ENCODE measurements at regions of chr21 and their contacts with region 1.

Region 1: DNA sequence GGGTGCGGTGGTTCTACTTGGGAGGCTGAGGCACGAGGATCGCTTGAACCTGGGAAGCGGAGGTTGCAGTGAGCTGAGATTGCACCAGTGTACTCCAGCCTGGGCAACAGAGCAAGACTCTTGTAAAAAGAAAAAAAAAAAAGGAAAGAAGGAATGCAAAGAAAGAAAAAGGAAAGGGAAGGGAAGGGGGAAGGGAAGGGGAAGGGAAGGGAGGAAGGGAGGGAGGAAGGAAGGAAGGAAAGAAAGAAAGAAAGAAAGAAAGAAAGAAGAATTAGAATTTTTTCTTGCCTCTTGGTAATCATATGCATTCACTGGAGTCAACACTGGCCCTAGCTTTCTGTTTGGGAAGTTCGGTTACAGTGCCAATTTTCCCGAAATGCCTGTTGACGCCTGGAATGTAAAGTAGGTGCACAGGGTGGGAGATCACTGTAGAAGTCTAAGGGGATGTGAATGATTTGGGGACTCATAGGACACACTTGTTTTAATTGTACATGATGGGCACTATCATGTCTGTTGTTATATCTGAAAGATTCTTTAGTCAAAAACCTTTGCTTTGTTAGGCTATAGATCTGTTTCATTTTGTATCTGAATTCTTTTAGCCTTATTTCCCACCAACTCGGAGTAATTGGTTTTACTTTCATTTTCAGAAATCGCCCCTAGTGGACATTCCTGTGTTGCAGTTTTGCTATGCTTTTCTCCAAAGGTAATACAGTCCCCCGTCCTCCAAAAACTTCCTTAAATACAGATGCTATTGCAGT is 59.8 kb upstream of the MORC3 start:
- DNase-seq: peak; percentile 22
- H3K4me3 ChIP-seq: peak overlapping the region; percentile 40
- H3K27me3 ChIP-seq: no peaks in the 10 kb centered on the region
- CTCF ChIP-seq: peak; percentile 72

Region 2: DNA sequence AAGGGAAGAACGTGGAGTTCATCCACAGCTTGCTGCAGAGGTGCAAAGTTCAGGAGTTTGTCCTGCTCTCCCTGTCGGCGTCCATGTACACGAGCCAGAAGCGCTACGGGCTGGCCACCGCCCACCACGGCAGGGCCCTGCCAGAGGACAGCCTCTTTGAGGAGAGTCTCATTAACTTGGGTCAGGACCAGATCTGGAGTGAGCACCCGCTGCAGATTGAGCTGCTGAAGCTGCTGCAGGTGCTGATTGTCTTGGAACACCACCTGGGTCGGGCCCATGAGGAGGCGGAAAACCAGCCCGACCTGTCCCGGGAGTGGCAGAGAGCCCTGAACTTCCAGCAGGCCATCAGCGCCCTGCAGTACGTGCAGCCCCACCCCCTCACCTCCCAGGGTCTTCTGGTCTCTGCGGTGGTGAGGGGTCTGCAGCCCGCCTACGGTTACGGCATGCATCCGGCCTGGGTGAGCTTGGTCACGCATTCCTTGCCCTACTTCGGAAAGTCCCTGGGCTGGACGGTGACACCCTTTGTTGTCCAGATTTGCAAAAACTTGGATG is 14.1 kb before region 1 on chr21:
- CTCF ChIA-PET with region 1: interaction called, 12 read pairs
- POLR2A ChIA-PET with region 1: no interaction called
- DNase-seq: no peak
- H3K4me3 ChIP-seq: no peak overlapping the region
- H3K27me3 ChIP-seq: no peaks in the 10 kb centered on the region
- CTCF ChIP-seq: no peak

Region 3: DNA sequence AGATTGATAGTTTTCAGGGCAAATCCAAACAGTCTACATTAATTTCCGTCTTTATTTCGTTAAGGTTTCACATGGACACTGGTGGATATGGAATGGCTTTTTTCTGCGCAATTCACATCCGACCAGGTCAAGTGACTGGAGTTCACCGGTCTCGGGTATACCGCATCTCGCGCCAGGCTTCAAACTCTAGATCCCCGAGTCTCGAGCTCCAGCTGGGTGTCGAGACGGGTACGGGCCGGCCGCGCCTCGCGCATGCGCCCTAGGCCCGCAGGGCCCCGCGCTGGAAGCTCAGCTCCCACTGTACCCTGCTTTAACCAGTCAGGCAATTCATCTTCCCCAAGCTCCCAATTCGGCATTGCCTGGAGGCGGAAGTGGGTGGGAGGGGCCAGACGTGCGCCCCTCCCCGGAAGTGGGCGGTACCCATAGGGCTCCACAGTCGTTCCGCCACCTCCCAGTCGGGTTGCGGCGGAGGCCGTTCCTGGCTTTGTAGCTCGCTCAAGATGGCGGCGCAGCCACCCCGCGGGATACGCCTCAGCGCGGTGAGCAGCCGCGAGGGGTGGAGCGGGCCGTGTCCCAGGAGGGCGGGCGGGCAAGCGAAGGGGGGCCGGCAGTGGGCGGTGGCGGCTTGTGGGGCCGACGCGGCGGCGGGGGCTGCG is 59.7 kb after region 1 on chr21 and contains the start of gene MORC3:
- CTCF ChIA-PET with region 1: no interaction called
- POLR2A ChIA-PET with region 1: interaction called, 10 read pairs
- DNase-seq: peak; percentile 95
- H3K4me3 ChIP-seq: peak within 1 kb of the TSS; percentile 82
- H3K27me3 ChIP-seq: no peaks in the 10 kb centered on the region; the same call in 1 of the 2 replicates
- CTCF ChIP-seq: no peak
- polyA plus RNA-seq, gene MORC3: 8.8 and 19.6 TPM in 2 replicates